ENCODE measurements at regions of chr12 and their contacts with region 1.

Region 1: DNA sequence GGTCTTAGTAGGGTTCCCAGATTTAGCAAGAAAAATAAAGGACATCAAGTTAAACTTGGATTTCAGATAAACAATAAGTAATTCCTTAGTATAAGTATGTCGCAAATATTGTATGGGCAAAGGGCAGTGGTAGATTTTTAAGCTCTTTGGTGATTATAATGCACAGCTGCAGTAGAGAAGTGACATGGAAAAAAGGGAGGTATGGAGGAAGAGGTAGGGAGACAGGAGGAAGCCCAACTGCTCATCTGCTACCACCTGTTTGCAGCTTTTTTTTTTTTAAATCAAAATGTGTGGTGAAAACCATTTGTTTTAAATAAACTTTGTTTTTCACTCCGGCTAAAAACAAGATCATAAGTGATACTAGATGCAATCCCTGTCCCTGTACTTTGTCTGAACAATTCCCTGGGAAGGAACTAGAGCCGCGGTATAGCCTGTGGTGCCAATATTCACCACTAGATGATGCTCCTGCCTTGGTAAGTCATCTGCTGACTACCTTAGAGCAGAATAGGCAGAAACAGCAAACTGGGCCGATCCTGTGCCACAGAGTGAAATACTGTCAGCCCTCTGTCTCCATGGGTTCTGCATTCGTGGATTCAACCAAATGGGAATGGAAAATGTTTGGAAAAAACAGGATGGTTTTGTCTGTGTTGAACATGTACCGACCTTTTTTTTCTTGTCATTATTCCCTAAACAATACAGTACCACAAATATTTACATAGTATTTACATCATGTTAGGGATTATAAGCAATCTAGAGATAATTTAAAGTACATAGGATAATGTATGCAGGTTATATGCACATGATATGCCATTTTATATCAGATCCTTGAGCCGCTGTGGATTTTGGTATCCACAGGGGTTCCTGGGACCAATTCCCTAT is 62.4 kb upstream of the PLBD1 start:
- DNase-seq: peak; percentile 42
- H3K4me3 Mint-ChIP-seq: no peak overlapping the region
- H3K27ac Mint-ChIP-seq: no peak overlapping the region
- H3K4me1 Mint-ChIP-seq: peaks cover 5% of the 10 kb centered on the region
- H3K27me3 Mint-ChIP-seq: peaks cover 16% of the 10 kb centered on the region

Region 2: DNA sequence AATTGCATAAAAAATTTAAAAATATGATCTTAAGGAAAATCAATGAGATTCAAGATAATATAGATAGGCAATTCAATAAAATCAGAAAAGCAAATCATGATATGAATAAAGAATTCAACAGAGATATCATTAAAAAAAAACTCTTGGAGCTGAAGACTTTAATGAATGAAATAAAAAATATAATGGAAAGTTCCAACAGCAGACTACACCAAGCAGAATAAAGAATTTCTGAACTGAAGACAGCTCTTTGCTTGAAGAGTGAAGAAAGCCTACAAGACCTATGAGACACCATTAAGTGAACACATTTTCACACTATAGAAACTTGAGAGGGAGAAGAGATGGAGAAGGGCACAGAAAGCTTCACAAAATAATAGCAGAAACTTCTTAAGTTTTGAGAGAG is 108.2 kb before region 1 on chr12:
- intact Hi-C with region 1: no loop called
- DNase-seq: no peak
- H3K4me3 Mint-ChIP-seq: no peak overlapping the region
- H3K27ac Mint-ChIP-seq: no peak overlapping the region
- H3K4me1 Mint-ChIP-seq: no peaks in the 10 kb centered on the region
- H3K27me3 Mint-ChIP-seq: no peaks in the 10 kb centered on the region

Region 3: DNA sequence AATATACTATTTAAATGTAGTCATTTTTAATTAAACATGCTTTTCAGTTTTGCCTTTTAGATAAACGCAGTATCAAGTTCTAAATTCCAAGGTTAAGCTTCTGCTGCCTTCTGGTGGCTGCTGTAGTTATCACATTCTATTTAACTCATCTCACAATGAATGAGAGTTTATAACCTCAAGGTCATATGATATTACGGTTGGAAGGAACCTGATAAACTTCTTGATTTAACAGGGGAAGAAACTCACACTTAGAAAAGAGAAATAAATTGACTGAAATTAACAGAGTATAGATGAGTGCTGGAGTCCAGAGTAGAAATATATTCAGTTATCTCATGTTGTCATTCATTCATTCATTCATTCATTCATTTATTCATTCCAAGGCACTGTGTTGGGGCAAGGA is 34.4 kb after region 1 on chr12:
- intact Hi-C with region 1: loop called (anchors 1 kb)
- DNase-seq: no peak
- H3K4me3 Mint-ChIP-seq: no peak overlapping the region
- H3K27ac Mint-ChIP-seq: no peak overlapping the region
- H3K4me1 Mint-ChIP-seq: peaks cover 11% of the 10 kb centered on the region
- H3K27me3 Mint-ChIP-seq: peaks cover 9% of the 10 kb centered on the region

Region 4: DNA sequence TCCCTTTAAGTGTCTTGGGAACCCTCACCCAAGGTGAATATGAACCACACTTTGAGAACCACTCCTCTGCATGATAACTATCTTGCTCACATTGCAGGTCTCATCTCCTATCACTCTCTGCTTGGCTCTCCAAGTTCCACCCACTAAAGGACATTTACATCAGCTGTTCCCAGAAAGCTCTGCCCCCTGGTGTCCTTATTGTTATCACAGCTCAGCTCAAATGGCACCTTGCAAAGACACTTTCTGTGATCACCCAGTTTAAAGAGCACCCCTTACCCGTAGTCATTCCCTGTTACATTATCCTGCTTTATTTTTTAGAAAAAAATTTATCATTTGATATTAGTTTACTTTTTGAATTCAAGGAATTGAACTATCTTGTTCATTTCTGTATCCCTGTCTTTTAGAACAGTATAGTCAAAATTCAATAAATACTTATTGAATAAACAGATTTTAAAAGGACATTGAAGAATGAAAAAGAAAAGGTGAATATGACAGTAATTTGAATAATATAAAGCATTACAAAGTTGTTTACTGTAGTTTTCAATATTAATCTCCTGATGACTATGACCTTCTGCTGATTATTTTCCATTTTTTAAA is 86.9 kb after region 1 on chr12:
- intact Hi-C with region 1: loop called (anchors 1 kb)
- DNase-seq: peak; percentile 33
- H3K4me3 Mint-ChIP-seq: no peak overlapping the region
- H3K27ac Mint-ChIP-seq: no peak overlapping the region
- H3K4me1 Mint-ChIP-seq: peaks cover 8% of the 10 kb centered on the region
- H3K27me3 Mint-ChIP-seq: peaks cover 20% of the 10 kb centered on the region